ENCODE measurements at regions of chr15 and their contacts with region 1.

Region 1: GRCh38 chr15:81274931-81275707 is 48.8 kb downstream of the STARD5 start:
- DNase-seq: peak; percentile 59 to 86 (median 78)
- ATAC-seq: peak; percentile 94
- H3K4me3 ChIP-seq: no peak overlapping the region
- H3K4me3 Mint-ChIP-seq: peak overlapping the region; percentile 13 to 75 (median 60)
- H3K27ac ChIP-seq: peak overlapping the region; percentile 52
- H3K27ac Mint-ChIP-seq: peak overlapping the region; percentile 24 to 90 (median 84)
- H3K4me1 ChIP-seq: peaks cover 0 to 27% of the 10 kb centered on the region in 2 donors
- H3K4me1 Mint-ChIP-seq: peaks cover 21 to 59% (median 54%) of the 10 kb centered on the region in 7 donors
- H3K27me3 ChIP-seq: no peaks in the 10 kb centered on the region
- H3K27me3 Mint-ChIP-seq: no peaks in the 10 kb centered on the region

Region 2: GRCh38 chr15:81286621-81287121 is 11.6 kb after region 1 on chr15:
- CTCF ChIA-PET with region 1: interaction called, 11 read pairs
- POLR2A ChIA-PET with region 1: interaction called, 642 read pairs
- intact Hi-C with region 1: loop called (anchors 1 kb)
- DNase-seq: peak in 7 of 9 donors; percentile 54 to 73 (median 68)
- ATAC-seq: peak; percentile 95
- H3K4me3 ChIP-seq: peak overlapping the region; percentile 49
- H3K4me3 Mint-ChIP-seq: peak overlapping the region; percentile 70 to 86 (median 80)
- H3K27ac ChIP-seq: peak overlapping the region; percentile 72
- H3K27ac Mint-ChIP-seq: peak overlapping the region; percentile 81 to 99 (median 96)
- H3K4me1 ChIP-seq: peaks cover 57 to 80% of the 10 kb centered on the region in 2 donors
- H3K4me1 Mint-ChIP-seq: peaks cover 52 to 98% (median 88%) of the 10 kb centered on the region in 7 donors
- H3K27me3 ChIP-seq: no peaks in the 10 kb centered on the region
- H3K27me3 Mint-ChIP-seq: no peaks in the 10 kb centered on the region

Region 3: GRCh38 chr15:81301815-81302399 is 26.8 kb after region 1 on chr15:
- CTCF ChIA-PET with region 1: interaction called, 128 read pairs
- POLR2A ChIA-PET with region 1: interaction called, 642 read pairs
- intact Hi-C with region 1: loop called (anchors 1 kb)
- DNase-seq: peak in 1 of 9 donors; percentile 60
- ATAC-seq: peak; percentile 61
- H3K4me3 ChIP-seq: peak overlapping the region; percentile 74
- H3K4me3 Mint-ChIP-seq: peak overlapping the region; percentile 80 to 100 (median 98)
- H3K27ac ChIP-seq: peak overlapping the region; percentile 87
- H3K27ac Mint-ChIP-seq: peak overlapping the region; percentile 79 to 100 (median 96)
- H3K4me1 ChIP-seq: peaks cover 46 to 59% of the 10 kb centered on the region in 2 donors
- H3K4me1 Mint-ChIP-seq: peaks cover 50 to 66% (median 64%) of the 10 kb centered on the region in 7 donors
- H3K27me3 ChIP-seq: no peaks in the 10 kb centered on the region
- H3K27me3 Mint-ChIP-seq: no peaks in the 10 kb centered on the region

Region 4: DNA sequence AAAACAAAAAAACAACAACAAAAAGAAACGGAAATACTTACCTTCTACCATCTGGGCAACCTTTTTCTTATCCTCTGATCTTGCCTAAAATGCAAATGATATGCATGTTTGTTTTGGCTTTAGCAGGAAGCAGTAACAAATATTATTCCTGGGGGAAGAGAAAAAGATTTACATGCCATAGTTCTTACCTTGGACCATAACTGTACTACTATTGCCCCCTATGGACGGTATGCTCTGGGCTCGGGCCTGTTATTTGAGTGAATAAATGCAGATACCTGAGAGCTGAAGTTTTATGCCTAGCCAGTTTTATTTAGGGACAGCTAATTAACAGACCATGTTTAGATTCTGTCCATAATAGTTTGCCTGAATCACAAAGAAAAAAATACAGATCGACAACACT is 61.4 kb after region 1 on chr15:
- CTCF ChIA-PET with region 1: interaction called, 39 read pairs
- POLR2A ChIA-PET with region 1: interaction called, 6 read pairs
- intact Hi-C with region 1: loop called (anchors 1 kb)
- DNase-seq: peak in 6 of 9 donors; percentile 32 to 49 (median 37)
- ATAC-seq: peak; percentile 70
- H3K4me3 ChIP-seq: no peak overlapping the region
- H3K4me3 Mint-ChIP-seq: no peak overlapping the region
- H3K27ac ChIP-seq: no peak overlapping the region
- H3K27ac Mint-ChIP-seq: peak overlapping the region in 4 of 9 donors; percentile 3 to 68 (median 17)
- H3K4me1 ChIP-seq: peaks cover 0 to 3% of the 10 kb centered on the region in 2 donors
- H3K4me1 Mint-ChIP-seq: peaks cover 4 to 22% (median 12%) of the 10 kb centered on the region in 7 donors
- H3K27me3 ChIP-seq: no peaks in the 10 kb centered on the region
- H3K27me3 Mint-ChIP-seq: peaks cover 0 to 9% (median 0%) of the 10 kb centered on the region in 5 donors

Region 5: DNA sequence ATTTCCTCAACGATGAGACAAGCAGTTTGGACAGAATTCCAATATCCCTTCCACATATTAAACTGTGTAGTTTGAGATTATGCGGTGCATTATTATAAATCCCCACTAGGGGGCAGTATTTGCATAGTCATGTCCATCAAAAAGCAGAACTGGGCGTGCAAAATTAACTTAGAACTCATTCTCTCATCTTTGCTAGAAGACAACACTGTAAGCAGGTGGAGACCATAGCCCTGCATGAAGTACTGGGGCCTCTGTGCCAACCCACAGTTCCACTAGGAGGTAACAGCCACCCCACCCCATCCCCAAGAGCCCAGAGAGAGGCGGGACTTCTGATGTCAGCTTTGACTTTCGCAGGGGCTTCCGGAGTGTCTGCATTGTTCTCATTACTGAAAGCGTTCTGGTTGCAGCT is 205.5 kb after region 1 on chr15:
- CTCF ChIA-PET with region 1: no interaction called
- POLR2A ChIA-PET with region 1: no interaction called
- intact Hi-C with region 1: loop called (anchors 1 to 10 kb)
- DNase-seq: peak in 8 of 9 donors; percentile 10 to 62 (median 48)
- ATAC-seq: peak; percentile 76
- H3K4me3 ChIP-seq: no peak overlapping the region
- H3K4me3 Mint-ChIP-seq: peak overlapping the region in 5 of 10 donors; percentile 21 to 66 (median 53)
- H3K27ac ChIP-seq: no peak overlapping the region
- H3K27ac Mint-ChIP-seq: no peak overlapping the region
- H3K4me1 ChIP-seq: no peaks in the 10 kb centered on the region
- H3K4me1 Mint-ChIP-seq: peaks cover 0 to 3% (median 0%) of the 10 kb centered on the region in 7 donors
- H3K27me3 ChIP-seq: no peaks in the 10 kb centered on the region
- H3K27me3 Mint-ChIP-seq: peaks cover 0 to 9% (median 0%) of the 10 kb centered on the region in 5 donors